Activated T-helper 1 cell treated with anti-CD3 and anti-CD28 coated beads, Interleukin-12 subunit alpha, Interleukin-12 subunit beta, Interleukin-2, Interleukin-4 antibody, amounts not matched to agents 30 ng/mL and 10 ng/mL and 1 ng/mL, durations not matched to agents 14 hours and 24 hours and 36 hours (primary cell): ENCODE measurements at regions of chr3 and their contacts with region 1.

Region 1: GRCh38 chr3:105868742-105869530 is at the start of gene CBLB:
- DNase-seq: peak; percentile 80
- H3K4me3 Mint-ChIP-seq: peak within 1 kb of the TSS; percentile 100
- H3K27ac Mint-ChIP-seq: peak within 1 kb of the TSS; percentile 99
- H3K4me1 Mint-ChIP-seq: peaks cover 48% of the 10 kb centered on the region
- H3K27me3 Mint-ChIP-seq: no peaks in the 10 kb centered on the region
- total RNA-seq, gene CBLB: 213 and 235 TPM in 2 replicates

Region 2: DNA sequence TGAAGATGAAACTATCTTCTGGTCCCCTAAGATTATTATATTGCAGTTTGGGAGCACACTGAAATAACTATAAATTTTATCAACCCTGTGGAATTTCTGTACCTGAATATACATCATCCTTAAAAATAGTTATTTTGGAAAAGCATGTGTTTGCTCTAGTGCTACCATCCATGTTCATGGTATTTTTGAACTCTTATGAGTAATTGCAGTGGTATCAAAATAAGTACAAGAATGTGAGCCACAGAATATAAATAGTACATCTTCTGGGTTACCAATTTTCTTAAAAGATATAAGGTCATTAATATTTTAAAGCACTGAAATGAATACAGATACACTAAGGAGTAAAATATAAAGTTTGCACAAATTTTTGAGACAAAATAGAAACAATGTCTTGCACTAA is 206.6 kb before region 1 on chr3:
- intact Hi-C with region 1: no loop called
- DNase-seq: no peak
- H3K4me3 Mint-ChIP-seq: no peak overlapping the region
- H3K27ac Mint-ChIP-seq: no peak overlapping the region
- H3K4me1 Mint-ChIP-seq: no peaks in the 10 kb centered on the region
- H3K27me3 Mint-ChIP-seq: no peaks in the 10 kb centered on the region

Region 3: DNA sequence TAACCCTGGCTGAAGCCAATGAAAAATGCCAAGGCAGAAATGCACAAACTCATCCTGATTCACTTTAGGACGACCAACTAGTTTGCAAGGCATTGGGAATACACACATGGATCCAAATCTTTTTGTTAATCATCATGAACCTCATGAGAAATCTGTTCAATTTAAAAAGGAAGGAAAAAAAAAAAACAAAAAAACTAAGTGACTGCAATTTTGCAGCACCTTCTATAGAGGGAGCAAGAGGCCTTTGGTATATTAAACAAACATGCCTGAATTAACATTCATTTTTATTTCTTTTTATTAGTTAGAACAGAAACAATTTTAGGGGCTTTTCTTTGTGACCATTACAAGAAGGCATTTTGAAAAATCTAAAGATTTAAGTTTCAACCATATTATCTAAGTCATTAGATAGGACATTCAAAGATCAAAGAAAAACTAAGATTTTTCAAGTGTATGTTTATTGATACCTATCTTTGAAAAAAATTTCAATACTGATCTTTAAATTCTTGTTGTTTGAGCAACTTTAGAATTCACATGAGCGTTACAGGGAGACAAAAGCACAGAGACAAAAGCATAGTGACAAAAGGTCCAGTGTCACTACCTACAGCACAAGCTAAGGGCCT is 182.5 kb before region 1 on chr3:
- intact Hi-C with region 1: loop called (anchors 1 kb)
- DNase-seq: no peak
- H3K4me3 Mint-ChIP-seq: no peak overlapping the region
- H3K27ac Mint-ChIP-seq: peak overlapping the region; percentile 54
- H3K4me1 Mint-ChIP-seq: peaks cover 32% of the 10 kb centered on the region
- H3K27me3 Mint-ChIP-seq: no peaks in the 10 kb centered on the region

Region 4: GRCh38 chr3:105836533-105836932 is 32.4 kb before region 1 on chr3:
- intact Hi-C with region 1: loop called (anchors 1 kb)
- DNase-seq: peak; percentile 27
- H3K4me3 Mint-ChIP-seq: peak overlapping the region; percentile 71
- H3K27ac Mint-ChIP-seq: peak overlapping the region; percentile 93
- H3K4me1 Mint-ChIP-seq: peaks cover 85% of the 10 kb centered on the region
- H3K27me3 Mint-ChIP-seq: no peaks in the 10 kb centered on the region

Region 5: DNA sequence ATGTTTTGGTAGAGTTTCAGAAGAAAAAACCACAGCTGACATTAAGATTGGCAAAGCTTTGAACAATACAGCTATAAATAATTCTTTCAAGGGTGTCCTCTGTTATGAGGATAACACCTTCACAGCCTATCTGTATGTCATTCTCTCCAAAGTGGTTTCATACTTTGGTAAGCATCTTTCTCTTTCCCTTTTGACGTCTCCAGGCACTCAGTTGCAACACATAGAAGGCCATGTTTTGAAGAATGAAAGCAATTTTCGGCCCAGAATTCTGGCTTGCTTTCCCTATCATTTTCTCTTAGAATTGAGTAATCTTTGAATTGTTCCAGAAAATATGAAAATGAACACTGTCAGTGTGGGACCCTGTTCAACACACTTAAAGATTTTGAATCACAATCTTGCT is 199.9 kb after region 1 on chr3:
- intact Hi-C with region 1: loop called (anchors 2 kb)
- DNase-seq: peak; percentile 3
- H3K4me3 Mint-ChIP-seq: no peak overlapping the region
- H3K27ac Mint-ChIP-seq: peak overlapping the region; percentile 87
- H3K4me1 Mint-ChIP-seq: peaks cover 15% of the 10 kb centered on the region
- H3K27me3 Mint-ChIP-seq: no peaks in the 10 kb centered on the region

Region 6: DNA sequence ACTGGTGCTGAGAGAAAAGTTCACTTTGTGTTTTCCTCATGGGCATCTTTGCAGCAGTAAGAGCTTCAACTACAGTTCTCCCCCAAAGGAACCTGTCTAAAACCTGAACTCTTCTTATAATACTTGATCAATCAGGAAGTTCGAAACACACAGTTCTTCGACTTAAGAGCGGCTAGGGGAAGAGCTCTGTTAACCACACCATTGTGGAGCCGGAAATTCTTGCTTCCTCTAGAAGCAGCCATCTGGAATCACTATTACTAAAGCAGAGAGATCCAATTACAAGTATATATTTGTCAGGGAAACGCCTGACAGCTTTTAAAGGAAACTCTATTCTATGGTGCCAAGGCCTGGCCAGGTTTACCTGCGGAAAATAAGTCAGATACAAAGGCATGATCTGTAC is 337.2 kb after region 1 on chr3:
- intact Hi-C with region 1: loop called (anchors 1 kb)
- DNase-seq: no peak
- H3K4me3 Mint-ChIP-seq: peak overlapping the region; percentile 54
- H3K27ac Mint-ChIP-seq: peak overlapping the region; percentile 92
- H3K4me1 Mint-ChIP-seq: peaks cover 58% of the 10 kb centered on the region
- H3K27me3 Mint-ChIP-seq: no peaks in the 10 kb centered on the region

Region 7: GRCh38 chr3:106473576-106474475 is 604.9 kb after region 1 on chr3:
- intact Hi-C with region 1: loop called (anchors 2 kb)
- DNase-seq: no peak
- H3K4me3 Mint-ChIP-seq: no peak overlapping the region
- H3K27ac Mint-ChIP-seq: peak overlapping the region; percentile 94
- H3K4me1 Mint-ChIP-seq: peaks cover 18% of the 10 kb centered on the region
- H3K27me3 Mint-ChIP-seq: no peaks in the 10 kb centered on the region